IMR-90 (cell line): ENCODE measurements at regions of chr3 and their contacts with region 1.

Region 1: GRCh38 chr3:169992161-169992560 is 25.6 kb downstream of the SEC62 start:
- DNase-seq: no peak
- ATAC-seq: peak; percentile 38; the same call in 1 of the 2 replicates
- H3K4me3 ChIP-seq: no peak overlapping the region
- H3K27ac ChIP-seq: no peak overlapping the region
- H3K4me1 ChIP-seq: peaks cover 7% of the 10 kb centered on the region
- H3K27me3 ChIP-seq: no peaks in the 10 kb centered on the region
- CTCF ChIP-seq: no peak
- POLR2A ChIP-seq: no peak
- RAD21 ChIP-seq: no peak

Region 2: GRCh38 chr3:169454823-169455222 is 537.3 kb before region 1 on chr3:
- CTCF ChIA-PET with region 1: no interaction called
- POLR2A ChIA-PET with region 1: no interaction called
- dilution Hi-C with region 1: no loop called
- in situ Hi-C with region 1: no loop called
- intact Hi-C with region 1: no loop called
- DNase-seq: peak; percentile 59
- ATAC-seq: peak; percentile 27; the same call in 1 of the 2 replicates
- H3K4me3 ChIP-seq: no peak overlapping the region
- H3K27ac ChIP-seq: no peak overlapping the region
- H3K4me1 ChIP-seq: no peaks in the 10 kb centered on the region
- H3K27me3 ChIP-seq: no peaks in the 10 kb centered on the region
- CTCF ChIP-seq: no peak
- POLR2A ChIP-seq: no peak
- RAD21 ChIP-seq: no peak

Region 3: DNA sequence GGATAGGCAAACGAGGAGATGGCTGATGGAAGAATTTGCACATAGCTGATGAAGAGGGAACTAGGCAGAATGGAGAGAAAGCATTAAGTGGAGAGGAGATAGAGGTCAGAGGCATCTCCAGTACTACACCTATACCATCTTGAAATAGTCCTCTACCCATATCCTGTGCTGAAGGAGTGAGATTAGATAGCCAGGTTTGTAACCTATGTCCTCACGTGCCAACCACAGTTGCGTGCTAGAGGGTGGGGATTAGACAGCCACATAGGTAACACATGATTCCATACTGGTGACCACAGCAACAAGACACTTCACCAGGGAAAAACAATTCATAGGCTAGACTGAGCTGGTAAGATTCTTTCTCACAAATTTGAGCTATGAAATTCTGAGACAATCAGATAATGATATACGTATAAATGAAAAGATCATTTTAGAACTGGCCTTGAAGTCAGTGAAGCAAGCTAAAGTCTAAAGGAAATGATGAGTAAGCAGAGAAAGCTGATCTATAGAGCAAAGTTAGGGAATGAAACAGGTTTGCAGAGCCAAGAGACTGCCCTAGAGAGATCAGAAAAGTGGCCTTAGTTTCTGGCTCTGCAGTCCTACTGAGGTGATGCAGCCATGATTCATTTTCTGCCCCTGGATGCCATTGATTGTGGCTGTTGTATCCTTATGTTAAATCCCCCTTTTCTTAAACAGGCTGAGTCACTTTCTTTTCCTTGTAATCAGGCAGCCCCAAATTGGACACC is 201.3 kb before region 1 on chr3:
- CTCF ChIA-PET with region 1: no interaction called
- POLR2A ChIA-PET with region 1: no interaction called
- dilution Hi-C with region 1: no loop called
- in situ Hi-C with region 1: no loop called
- intact Hi-C with region 1: loop called (anchors 5 kb)
- DNase-seq: peak; percentile 55
- ATAC-seq: peak; percentile 35; the same call in 1 of the 2 replicates
- H3K4me3 ChIP-seq: no peak overlapping the region
- H3K27ac ChIP-seq: no peak overlapping the region
- H3K4me1 ChIP-seq: peaks cover 4% of the 10 kb centered on the region
- H3K27me3 ChIP-seq: no peaks in the 10 kb centered on the region
- CTCF ChIP-seq: no peak
- POLR2A ChIP-seq: no peak
- RAD21 ChIP-seq: no peak

Region 4: GRCh38 chr3:170098753-170099152 is 106.6 kb after region 1 on chr3:
- CTCF ChIA-PET with region 1: interaction called, 4 read pairs
- POLR2A ChIA-PET with region 1: no interaction called
- dilution Hi-C with region 1: no loop called
- in situ Hi-C with region 1: no loop called
- intact Hi-C with region 1: loop called (anchors 5 kb)
- DNase-seq: peak; percentile 35
- ATAC-seq: no peak
- H3K4me3 ChIP-seq: no peak overlapping the region
- H3K27ac ChIP-seq: no peak overlapping the region
- H3K4me1 ChIP-seq: no peaks in the 10 kb centered on the region
- H3K27me3 ChIP-seq: no peaks in the 10 kb centered on the region
- CTCF ChIP-seq: no peak
- POLR2A ChIP-seq: no peak
- RAD21 ChIP-seq: no peak

Region 5: DNA sequence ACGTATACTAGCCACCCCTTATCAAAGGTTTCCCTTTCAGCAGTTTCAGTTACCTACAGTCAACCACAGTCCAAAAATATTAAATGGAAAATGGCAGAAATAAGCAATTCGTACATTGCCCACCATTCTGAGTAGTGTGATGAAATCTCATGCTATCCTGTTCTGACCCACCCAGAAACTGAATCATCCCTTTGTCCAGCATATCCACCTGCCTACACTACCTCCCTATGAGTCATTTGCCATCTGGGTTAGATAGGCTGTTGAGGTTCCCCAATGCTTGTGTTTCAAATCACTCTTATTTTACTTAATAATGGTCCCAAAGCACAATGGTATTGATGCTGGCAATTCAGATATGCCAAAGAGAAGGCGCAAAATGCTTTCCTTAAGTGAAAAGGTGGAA is 204.7 kb after region 1 on chr3:
- CTCF ChIA-PET with region 1: no interaction called
- POLR2A ChIA-PET with region 1: no interaction called
- dilution Hi-C with region 1: no loop called
- in situ Hi-C with region 1: no loop called
- intact Hi-C with region 1: no loop called
- DNase-seq: peak; percentile 52
- ATAC-seq: no peak
- H3K4me3 ChIP-seq: no peak overlapping the region
- H3K27ac ChIP-seq: no peak overlapping the region
- H3K4me1 ChIP-seq: no peaks in the 10 kb centered on the region
- H3K27me3 ChIP-seq: no peaks in the 10 kb centered on the region
- CTCF ChIP-seq: no peak
- POLR2A ChIP-seq: no peak
- RAD21 ChIP-seq: no peak